CD4-positive, alpha-beta T cell (primary cell): ENCODE measurements at regions of chr5 and their contacts with region 1.

Region 1: DNA sequence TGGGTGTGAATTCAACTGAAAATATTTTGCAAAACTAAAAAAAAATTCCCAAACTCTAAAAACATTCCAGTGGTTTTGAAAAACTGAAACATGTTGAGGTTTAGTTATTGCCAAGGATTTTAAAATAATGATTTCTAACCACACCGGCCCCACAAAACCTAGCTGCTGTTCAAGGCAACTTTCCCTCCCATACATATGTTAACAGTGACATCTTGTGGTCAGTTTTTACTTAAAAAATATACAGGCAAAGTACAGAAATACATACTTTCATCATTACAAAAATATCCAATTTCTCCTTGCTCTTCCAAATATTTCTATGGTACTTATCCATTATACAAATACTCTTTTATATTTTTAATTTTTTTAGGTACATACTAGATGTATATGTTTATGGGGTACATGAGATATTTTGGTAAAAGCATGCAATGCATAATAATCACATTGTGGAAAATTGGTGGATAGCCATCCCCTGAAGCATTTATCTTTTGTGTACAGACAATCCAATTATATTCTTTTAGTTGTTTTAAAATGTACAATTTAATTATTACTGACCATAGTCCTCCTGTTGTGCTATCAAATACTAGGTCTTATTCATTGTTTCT is 34.4 kb upstream of the MRPS30 start:
- DNase-seq: peak in 3 of 14 experiments; percentile 34 to 41 (median 36)
- ATAC-seq: no peak
- H3K4me3 ChIP-seq: no peak overlapping the region
- H3K4me3 Mint-ChIP-seq: no peak overlapping the region
- H3K27ac ChIP-seq: no peak overlapping the region
- H3K27ac Mint-ChIP-seq: no peak overlapping the region
- H3K4me1 ChIP-seq: no peaks in the 10 kb centered on the region
- H3K4me1 Mint-ChIP-seq: no peaks in the 10 kb centered on the region
- H3K27me3 ChIP-seq: peaks cover 0 to 13% of the 10 kb centered on the region in 2 experiments
- H3K27me3 Mint-ChIP-seq: peaks cover 20% of the 10 kb centered on the region
- CTCF ChIP-seq: peak; percentile 62

Region 2: DNA sequence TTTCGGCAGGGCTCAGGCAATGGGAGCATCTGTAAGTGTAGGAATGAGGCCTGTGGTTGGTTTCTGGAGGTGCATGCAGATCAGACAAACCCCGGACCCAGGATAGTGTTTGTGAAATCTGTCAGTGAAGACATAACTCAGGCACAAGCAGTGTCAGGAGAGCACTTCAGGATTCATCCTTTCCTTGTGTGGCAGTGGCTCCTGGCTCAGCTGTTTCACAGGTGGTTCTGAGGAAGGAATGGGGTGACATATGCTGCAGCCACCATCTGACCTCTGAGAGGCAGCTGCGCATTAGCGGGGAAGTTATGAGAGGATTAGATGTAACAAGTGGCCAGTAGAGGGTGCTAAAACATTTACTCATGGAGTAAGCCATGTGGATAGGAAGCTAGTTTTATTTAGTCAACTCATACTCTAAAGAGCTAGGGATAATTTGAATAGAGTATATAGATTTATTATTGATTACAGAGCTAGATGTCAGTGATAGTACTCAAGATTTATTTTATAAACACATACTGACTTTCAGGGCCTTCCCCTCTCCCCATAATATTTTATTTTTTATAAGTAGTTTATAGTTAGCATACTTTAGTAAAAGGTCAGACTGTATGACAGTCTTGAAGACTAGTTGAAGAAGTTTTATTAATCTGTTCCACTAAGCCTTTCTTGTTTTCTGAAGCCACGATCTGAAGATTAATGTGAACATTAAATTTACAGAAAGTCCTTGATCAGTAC is 1143.0 kb before region 1 on chr5:
- CTCF ChIA-PET with region 1: no interaction called
- POLR2A ChIA-PET with region 1: no interaction called
- intact Hi-C with region 1: loop called (anchors 10 kb)
- DNase-seq: peak in 9 of 14 experiments; percentile 2 to 71 (median 12)
- ATAC-seq: peak; percentile 84
- H3K4me3 ChIP-seq: no peak overlapping the region
- H3K4me3 Mint-ChIP-seq: no peak overlapping the region
- H3K27ac ChIP-seq: no peak overlapping the region
- H3K27ac Mint-ChIP-seq: no peak overlapping the region
- H3K4me1 ChIP-seq: no peaks in the 10 kb centered on the region
- H3K4me1 Mint-ChIP-seq: peaks cover 31% of the 10 kb centered on the region
- H3K27me3 ChIP-seq: no peaks in the 10 kb centered on the region
- H3K27me3 Mint-ChIP-seq: no peaks in the 10 kb centered on the region
- CTCF ChIP-seq: peak; percentile 62

Region 3: DNA sequence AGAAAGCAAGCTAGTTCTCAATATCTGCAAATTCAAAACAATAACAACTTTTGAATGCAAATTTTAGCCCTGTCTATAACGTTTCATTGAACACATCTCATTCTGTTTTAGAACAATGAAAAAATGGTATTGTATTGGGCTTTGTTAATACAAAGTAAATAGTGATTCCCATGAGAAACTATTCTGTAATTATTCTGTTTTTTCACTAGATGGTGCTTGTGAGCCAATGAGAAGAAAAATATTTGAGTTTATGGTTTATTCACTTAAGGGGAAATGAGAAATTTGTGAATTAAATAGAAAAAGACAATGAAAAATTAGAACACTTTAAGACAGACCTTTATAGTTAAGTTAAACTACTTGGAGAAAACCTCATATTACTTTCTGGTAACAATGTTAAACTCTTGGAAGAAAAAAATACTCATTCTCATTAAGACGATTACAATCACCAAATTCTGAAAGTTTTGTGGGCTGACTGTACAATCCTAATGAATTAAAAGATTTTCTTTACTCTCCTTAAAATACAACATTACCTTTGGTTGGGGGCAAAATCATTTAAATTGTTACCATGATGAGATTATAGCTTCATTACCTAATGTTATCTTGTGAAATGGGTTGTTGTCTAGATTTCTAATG is 1044.4 kb before region 1 on chr5:
- CTCF ChIA-PET with region 1: no interaction called
- POLR2A ChIA-PET with region 1: no interaction called
- intact Hi-C with region 1: loop called in 1 of 2 experiments (anchors 5 kb)
- DNase-seq: peak in 2 of 14 experiments; percentile 1 to 3
- ATAC-seq: no peak
- H3K4me3 ChIP-seq: no peak overlapping the region
- H3K4me3 Mint-ChIP-seq: no peak overlapping the region
- H3K27ac ChIP-seq: no peak overlapping the region
- H3K27ac Mint-ChIP-seq: no peak overlapping the region
- H3K4me1 ChIP-seq: no peaks in the 10 kb centered on the region
- H3K4me1 Mint-ChIP-seq: no peaks in the 10 kb centered on the region
- H3K27me3 ChIP-seq: no peaks in the 10 kb centered on the region
- H3K27me3 Mint-ChIP-seq: no peaks in the 10 kb centered on the region
- CTCF ChIP-seq: peak; percentile 63

Region 4: GRCh38 chr5:44443172-44443571 is 331.2 kb before region 1 on chr5:
- CTCF ChIA-PET with region 1: no interaction called
- POLR2A ChIA-PET with region 1: no interaction called
- intact Hi-C with region 1: no loop called
- DNase-seq: no peak
- ATAC-seq: no peak
- H3K4me3 ChIP-seq: no peak overlapping the region
- H3K4me3 Mint-ChIP-seq: no peak overlapping the region
- H3K27ac ChIP-seq: no peak overlapping the region
- H3K27ac Mint-ChIP-seq: no peak overlapping the region
- H3K4me1 ChIP-seq: no peaks in the 10 kb centered on the region
- H3K4me1 Mint-ChIP-seq: no peaks in the 10 kb centered on the region
- H3K27me3 ChIP-seq: no peaks in the 10 kb centered on the region
- H3K27me3 Mint-ChIP-seq: no peaks in the 10 kb centered on the region
- CTCF ChIP-seq: no peak